SK-MEL-5 (cell line): ENCODE measurements at regions of chr6 and their contacts with region 1.

Region 1: DNA sequence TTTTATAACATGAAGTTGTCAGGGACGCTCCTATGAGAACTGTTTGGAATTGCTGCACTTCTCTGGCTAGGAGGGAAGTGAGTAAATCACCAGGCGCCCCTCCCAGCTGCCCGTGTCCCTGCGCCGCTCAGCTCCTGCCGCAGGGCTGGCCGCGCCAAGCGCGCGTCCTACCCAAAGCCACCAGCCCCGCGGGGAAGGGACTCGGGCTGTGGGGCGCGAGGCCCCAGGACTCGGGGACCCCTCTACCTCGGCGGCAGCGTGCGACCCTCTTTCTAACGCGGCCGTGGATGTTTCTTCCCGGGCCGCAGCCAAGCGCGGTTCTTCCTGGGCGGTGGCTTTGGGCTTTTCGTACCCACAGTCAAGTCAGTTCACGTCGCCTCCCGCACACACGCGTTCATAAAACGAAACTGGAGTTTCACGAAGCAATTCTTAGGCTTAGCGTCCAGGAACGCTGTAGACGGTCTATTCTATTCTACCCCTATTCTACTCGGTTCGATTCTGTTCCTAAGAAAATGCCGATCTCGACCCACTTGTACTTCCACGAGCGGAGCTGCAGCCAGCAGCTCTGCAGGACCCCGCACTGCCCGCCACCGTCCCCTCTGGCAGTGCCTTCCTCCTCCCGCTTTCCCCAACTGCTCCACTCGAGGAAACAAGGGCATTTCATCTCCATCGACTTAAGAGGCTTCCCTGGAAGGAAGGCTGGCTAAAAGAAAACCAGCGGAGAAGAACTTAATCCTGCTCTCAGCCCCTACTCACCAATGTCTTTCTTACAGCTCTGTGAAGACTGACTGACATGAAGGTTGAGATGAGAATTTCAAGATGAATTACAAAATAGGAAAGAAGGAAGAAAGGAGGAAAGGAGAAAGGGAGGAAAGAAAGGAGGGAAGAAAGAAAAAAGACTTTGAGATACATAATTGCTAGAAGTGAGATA is 15.4 kb downstream of the FOXC1 start:
- DNase-seq: no peak

Region 2: DNA sequence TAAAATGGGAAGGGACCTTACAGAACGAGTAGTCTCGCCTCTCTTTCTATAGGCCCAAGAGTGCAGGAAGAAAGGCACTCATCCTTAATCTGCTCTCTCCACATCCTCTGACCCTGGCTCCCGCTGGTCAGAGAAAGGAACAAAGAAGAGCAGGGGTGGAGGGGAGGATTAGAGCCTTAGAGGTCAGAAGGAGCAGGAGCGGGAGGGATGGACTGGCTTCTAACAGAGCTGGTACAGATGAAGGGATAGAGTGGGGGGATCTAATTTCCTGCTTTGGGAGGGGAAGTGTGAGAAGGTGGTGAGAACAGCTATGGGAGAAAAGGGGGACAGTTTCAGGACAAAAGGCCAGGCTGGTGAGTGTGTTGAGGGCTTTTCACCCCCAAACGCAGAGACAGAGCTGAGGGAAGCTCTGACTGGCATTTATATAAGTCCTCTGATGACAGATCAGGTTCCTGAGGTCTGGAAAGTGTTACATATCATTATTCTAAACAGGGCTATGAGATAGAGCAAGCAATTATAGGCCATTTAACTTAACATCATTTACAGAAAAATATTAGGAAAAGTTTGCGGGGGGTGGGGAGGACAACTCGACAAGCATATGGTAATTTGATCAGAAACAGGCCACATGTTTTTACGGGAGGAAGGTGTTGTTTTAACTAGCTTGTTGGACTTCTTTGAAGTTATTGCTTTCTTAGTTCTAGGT is 95.7 kb after region 1 on chr6:
- in situ Hi-C with region 1: no loop called
- DNase-seq: no peak

Region 3: DNA sequence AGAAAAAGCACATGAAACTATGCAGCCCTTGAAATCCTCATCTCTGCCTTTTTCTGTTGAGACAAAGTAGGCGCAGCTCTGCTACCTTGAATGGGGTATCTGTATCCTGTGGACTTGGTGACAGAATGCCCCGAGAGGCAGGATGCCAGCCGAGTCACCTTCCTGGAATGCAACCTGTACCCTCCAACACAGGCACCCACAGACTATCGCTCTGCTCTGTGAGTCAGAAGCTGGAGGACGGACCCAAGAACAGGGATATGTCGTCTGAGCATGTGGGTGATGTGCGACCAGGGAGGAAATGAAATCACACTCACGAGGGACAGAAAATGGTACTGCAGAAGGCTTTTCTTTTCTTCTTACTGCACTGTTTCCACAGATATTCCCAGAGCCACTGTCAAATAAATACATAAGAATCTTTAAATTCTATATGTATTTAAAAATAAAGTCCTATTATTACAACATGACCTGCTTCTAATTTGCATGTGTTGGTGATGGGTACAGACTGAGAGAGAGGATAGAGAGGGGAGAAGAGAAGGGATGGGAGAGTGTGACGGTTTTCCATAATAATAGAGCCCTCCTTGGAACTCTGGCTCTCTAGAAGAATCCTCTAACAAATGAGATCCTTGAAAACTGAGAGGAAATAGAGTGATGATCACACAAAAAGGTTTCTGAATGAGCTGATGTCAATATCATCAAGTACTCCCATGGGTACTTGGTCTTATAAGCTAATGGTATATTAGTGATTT is 292.7 kb after region 1 on chr6:
- in situ Hi-C with region 1: loop called (anchors 25 kb)
- DNase-seq: no peak